ENCODE measurements at regions of chr9 and their contacts with region 1.

Region 1: GRCh38 chr9:110638381-110638954 is 30.1 kb upstream of the MUSK start:
- DNase-seq: no peak
- H3K4me3 ChIP-seq: no peak overlapping the region
- H3K27ac ChIP-seq: no peak overlapping the region
- H3K4me1 ChIP-seq: no peaks in the 10 kb centered on the region
- H3K27me3 ChIP-seq: no peaks in the 10 kb centered on the region
- CTCF ChIP-seq: peak; percentile 56

Region 2: DNA sequence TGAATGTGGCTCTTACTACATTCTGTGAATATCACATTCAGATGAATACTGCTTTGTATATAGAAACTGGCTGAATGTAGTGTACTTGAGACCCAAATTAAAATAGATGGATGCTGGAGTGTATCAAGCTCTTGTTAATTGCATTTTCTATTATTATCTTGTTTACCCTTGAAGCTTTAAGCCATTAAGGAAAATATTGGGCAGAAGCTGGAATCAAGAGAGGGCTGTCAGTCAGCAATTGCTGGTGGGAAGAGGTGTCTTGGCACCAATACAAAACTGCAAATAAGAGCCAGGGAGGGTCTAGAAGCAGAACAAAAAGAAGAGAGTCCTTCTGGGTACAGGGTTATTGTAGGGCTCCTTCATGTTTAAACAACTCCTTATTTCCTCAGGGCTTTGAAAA is 69.0 kb after region 1 on chr9:
- intact Hi-C with region 1: no loop called
- DNase-seq: no peak
- H3K4me3 ChIP-seq: no peak overlapping the region
- H3K27ac ChIP-seq: no peak overlapping the region
- H3K4me1 ChIP-seq: no peaks in the 10 kb centered on the region
- H3K27me3 ChIP-seq: no peaks in the 10 kb centered on the region
- CTCF ChIP-seq: no peak

Region 3: GRCh38 chr9:111161015-111161415 is 522.5 kb after region 1 on chr9:
- intact Hi-C with region 1: no loop called
- DNase-seq: no peak
- H3K4me3 ChIP-seq: no peak overlapping the region
- H3K27ac ChIP-seq: peak overlapping the region; percentile 11
- H3K4me1 ChIP-seq: peaks cover 6% of the 10 kb centered on the region
- H3K27me3 ChIP-seq: no peaks in the 10 kb centered on the region
- CTCF ChIP-seq: no peak

Region 4: DNA sequence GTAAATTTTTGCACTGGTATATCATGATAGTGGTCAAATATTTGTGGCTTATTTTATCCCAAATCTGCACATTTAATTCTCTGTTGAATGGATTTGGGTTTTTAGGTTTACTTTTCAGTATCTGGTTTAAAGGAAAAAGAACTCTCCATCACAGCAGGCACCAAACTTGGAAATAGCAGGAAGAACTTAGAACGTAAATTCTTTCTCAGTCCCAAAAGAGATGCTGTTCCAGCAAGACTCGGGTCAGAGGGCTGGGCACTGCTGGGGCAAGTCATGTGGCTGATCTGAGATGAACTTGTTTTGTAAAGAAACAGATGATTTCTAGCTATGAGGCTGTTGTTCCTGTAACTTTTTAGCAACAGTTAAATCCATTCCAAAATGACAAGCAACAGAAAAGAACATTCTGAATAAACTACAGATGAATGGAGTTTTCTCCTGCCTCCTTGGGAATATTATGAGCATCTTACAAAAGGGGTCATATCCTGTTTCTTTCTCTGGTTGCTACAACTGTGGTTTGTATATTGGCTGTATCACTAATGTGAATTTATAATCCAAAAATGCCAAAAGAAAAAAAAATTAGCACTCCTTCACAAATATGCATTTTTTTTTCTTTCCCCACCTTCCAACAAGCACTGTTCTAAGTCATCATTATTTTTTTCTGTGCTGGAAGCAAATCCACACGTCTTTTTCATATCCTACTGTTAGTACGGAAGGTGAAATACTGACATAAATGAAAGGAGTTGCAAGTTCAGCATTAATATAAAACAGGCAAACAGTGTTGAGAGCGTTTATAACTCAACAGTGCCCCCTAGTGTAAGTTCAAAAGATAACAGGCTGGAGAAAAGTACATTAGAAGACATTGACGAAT is 660.5 kb after region 1 on chr9:
- intact Hi-C with region 1: loop called (anchors 5 kb)
- DNase-seq: peak; percentile 59
- H3K4me3 ChIP-seq: peak overlapping the region; percentile 16
- H3K27ac ChIP-seq: peak overlapping the region; percentile 66
- H3K4me1 ChIP-seq: no peaks in the 10 kb centered on the region
- H3K27me3 ChIP-seq: peaks cover 11% of the 10 kb centered on the region
- CTCF ChIP-seq: peak; percentile 81